ENCODE measurements at regions of chr20 and their contacts with region 1.

Region 1: DNA sequence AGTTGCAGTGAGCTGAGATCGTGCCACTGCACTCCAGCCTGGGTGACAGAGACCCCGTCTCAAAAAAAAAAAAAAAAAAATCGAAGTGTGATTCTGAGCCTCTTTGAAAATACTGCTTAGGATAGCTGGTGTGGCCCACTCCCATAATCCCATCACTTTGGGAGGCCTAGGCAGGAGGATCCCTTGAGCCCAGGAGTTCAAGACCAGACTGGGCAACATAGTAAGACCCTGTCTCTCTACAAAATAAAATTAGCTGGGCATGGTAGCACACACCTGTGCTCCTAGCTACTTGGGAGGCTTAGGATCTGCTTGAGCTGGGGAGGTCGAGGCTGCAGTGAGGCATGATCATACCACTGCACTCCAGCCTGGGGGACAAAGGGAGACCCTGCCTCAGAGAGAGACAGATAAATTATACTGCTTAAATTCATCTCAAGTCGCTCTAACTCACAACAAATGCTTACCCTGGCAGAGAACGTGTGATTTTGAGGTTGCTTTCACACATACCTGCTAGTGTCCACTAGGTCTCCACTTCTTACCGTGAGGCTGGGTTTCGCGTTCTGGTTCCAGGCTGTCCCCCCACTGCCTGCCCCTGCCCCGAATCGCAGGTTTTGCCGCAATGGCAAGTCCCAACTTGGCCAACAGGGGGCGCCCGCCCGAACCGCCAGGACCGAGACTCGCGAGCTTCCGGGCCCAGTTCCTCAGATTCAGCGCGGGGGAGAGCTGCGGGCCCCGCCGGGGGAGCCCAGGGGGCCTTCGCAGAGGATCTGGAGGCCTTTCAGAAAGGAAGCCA is 12.3 kb upstream of the TMC2 start:
- DNase-seq: peak; percentile 72
- H3K4me3 Mint-ChIP-seq: peak overlapping the region; percentile 90
- H3K27ac Mint-ChIP-seq: peak overlapping the region; percentile 87
- H3K4me1 Mint-ChIP-seq: no peaks in the 10 kb centered on the region
- H3K27me3 Mint-ChIP-seq: peaks cover 25% of the 10 kb centered on the region
- CTCF ChIP-seq: peak; percentile 86

Region 2: GRCh38 chr20:2470423-2471193 is 53.5 kb before region 1 on chr20 and contains the start of gene SNRPB:
- CTCF ChIA-PET with region 1: interaction called, 17 read pairs
- POLR2A ChIA-PET with region 1: interaction called, 17 read pairs
- intact Hi-C with region 1: no loop called
- DNase-seq: peak; percentile 98
- H3K4me3 Mint-ChIP-seq: peak within 1 kb of the TSS; percentile 96
- H3K27ac Mint-ChIP-seq: peak within 1 kb of the TSS; percentile 100
- H3K4me1 Mint-ChIP-seq: peaks cover 55% of the 10 kb centered on the region
- H3K27me3 Mint-ChIP-seq: no peaks in the 10 kb centered on the region
- CTCF ChIP-seq: no peak
- total RNA-seq, gene SNRPB: 236 and 240 TPM in 2 replicates

Region 3: DNA sequence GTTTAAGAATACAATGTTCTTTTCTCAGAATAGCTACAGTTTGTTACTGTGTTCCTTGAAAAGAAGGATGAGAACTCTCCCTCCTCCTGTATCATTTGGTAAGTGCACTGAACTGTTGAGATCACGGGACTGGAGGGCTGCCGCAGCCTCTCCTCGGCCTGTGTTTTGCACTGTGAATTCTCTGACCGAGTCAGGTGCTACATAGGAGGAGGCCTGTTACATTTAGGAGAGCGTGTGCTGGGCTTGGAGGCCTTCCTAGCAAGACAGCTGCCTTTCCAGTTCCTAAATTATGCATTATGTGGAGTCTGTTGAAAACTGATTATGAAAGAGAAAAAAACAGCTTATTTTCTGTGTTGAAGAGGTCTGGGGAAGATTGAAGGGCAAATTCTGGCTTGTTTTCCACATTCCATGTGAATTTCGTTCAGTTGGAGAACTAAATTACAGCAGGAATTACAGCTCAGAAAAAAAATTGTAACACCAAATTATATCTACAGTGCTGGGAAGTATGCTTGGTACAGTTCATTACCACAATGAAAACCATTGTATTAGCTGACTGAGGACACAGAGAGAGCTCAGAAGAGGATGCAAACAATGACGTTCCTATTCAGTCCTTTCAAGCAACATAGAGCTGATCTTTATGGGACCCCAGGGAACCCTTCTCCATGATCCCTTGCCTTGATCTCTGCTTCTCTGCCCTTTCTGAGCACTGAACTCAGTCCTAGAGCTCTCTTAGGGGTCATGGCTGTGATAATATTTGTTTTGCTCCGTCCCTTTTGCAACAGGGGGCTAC is 15.0 kb after region 1 on chr20:
- CTCF ChIA-PET with region 1: interaction called, 41 read pairs
- POLR2A ChIA-PET with region 1: interaction called, 3 read pairs
- intact Hi-C with region 1: no loop called
- DNase-seq: no peak
- H3K4me3 Mint-ChIP-seq: no peak overlapping the region
- H3K27ac Mint-ChIP-seq: no peak overlapping the region
- H3K4me1 Mint-ChIP-seq: no peaks in the 10 kb centered on the region
- H3K27me3 Mint-ChIP-seq: peaks cover 96% of the 10 kb centered on the region
- CTCF ChIP-seq: no peak

Region 4: DNA sequence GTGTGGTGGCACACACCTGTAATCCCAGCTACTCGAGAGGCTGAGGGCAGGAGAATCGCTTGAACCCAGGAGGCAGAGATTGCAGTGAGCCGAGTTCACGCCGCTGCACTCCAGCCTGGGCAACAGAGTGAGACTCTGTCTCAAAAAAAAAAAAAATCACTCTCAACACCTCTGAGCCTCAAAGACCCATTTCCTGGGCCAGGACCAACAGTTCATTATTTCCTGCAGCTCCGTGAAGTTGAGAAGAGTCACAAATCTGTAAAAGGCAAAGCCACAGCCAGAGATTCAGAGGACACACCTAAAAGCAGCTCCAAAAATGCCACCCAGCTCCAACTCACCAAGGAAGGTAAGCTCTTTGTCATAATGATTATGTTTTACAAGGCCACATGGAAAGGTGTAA is 113.1 kb after region 1 on chr20:
- CTCF ChIA-PET with region 1: interaction called, 16 read pairs
- POLR2A ChIA-PET with region 1: no interaction called
- intact Hi-C with region 1: no loop called
- DNase-seq: no peak
- H3K4me3 Mint-ChIP-seq: no peak overlapping the region
- H3K27ac Mint-ChIP-seq: no peak overlapping the region
- H3K4me1 Mint-ChIP-seq: no peaks in the 10 kb centered on the region
- H3K27me3 Mint-ChIP-seq: peaks cover 10% of the 10 kb centered on the region
- CTCF ChIP-seq: no peak

Region 5: DNA sequence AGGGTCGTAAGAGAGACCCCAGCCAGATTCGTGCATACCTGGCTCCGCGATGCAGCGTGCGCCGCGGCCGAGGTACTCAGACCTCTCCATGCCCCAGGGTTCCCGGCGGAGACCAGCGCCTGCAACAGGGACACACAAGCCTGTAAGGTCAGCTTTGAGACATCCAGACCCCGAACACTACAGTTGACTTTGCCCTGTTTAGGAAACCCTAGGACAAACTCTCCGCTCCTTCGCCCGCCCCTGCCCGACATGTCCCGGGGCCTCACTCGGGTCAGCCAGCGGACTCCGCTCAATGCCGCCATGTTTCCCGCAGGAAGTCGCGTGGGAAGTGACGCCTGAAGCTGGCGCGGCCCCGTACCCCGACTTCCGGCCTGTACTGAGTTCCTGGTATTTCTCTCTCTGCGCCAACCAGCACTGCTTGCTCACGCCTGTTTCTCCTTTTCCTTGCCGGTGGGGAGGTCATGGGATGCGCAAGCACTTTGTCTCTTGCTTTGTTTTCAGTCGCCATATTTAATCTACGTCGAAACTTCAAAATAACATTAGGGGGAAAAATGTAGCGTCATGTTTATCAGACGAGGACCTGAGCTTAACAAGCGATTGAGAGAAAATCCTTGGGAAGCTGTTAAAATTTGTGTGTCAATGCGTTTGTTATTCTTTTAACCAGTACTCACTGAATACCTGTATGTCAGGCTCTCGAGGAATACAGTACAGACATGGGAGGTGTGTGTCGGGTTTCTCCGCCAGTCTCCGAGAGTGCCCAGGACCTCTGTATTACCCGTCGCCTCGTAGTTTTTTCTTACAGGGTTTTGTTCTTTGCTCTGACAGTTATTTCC is 140.0 kb after region 1 on chr20 and contains the start of gene IDH3B:
- CTCF ChIA-PET with region 1: interaction called, 10 read pairs
- POLR2A ChIA-PET with region 1: no interaction called
- intact Hi-C with region 1: no loop called
- DNase-seq: peak; percentile 87
- H3K4me3 Mint-ChIP-seq: peak within 1 kb of the TSS; percentile 77
- H3K27ac Mint-ChIP-seq: peak within 1 kb of the TSS; percentile 96
- H3K4me1 Mint-ChIP-seq: peaks cover 16% of the 10 kb centered on the region
- H3K27me3 Mint-ChIP-seq: peaks cover 14% of the 10 kb centered on the region
- CTCF ChIP-seq: no peak
- total RNA-seq, gene IDH3B: 80.5 and 102 TPM in 2 replicates

Region 6: DNA sequence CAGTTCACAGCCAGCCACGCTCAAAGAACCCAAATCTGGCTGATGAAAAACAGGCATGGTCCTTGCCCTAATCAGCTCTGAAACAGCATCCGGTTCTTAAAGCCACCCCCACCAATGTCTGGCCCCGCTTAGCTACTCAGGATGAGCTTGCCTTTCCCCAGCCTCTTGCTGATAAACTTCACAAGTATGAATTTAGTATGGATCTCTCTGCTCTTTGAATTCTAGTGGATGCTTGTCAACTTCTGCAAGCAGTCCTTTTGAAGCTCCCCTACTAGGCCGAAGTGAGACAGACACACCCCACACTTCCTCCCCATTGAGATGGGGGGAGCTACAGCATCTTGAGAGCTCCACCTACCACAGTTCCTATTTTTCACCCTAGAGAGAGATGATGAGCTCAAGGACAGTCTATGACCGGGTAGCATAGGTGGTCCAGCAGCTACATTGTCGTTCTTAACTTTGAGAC is 205.2 kb after region 1 on chr20:
- CTCF ChIA-PET with region 1: no interaction called
- POLR2A ChIA-PET with region 1: no interaction called
- intact Hi-C with region 1: no loop called
- DNase-seq: no peak
- H3K4me3 Mint-ChIP-seq: no peak overlapping the region
- H3K27ac Mint-ChIP-seq: no peak overlapping the region
- H3K4me1 Mint-ChIP-seq: no peaks in the 10 kb centered on the region
- H3K27me3 Mint-ChIP-seq: peaks cover 79% of the 10 kb centered on the region
- CTCF ChIP-seq: no peak